MCF 10A (cell line): ENCODE measurements at regions of chr4 and their contacts with region 1.

Region 1: DNA sequence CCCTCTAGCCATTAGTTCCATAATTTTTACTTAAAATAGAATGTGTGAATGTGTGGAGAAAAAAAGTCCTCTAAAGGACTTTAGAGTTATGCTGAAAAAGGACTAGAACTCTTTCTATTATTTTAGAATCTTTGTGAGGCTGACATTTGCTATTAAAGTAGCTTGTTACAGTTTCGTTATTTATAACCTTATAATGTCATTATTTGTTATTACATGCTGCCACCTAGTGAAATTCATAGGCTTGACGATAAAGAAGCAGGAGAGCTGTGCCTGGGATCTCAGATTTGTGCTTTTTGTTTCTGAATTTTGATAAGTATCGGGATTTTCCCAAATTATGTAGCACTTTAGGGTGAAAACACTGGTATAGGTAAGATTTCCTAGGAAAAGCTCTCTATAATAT is 38.5 kb upstream of the TAPT1 start:
- DNase-seq: peak; percentile 51
- H3K4me3 Mint-ChIP-seq: no peak overlapping the region
- H3K27ac Mint-ChIP-seq: no peak overlapping the region
- H3K4me1 Mint-ChIP-seq: no peaks in the 10 kb centered on the region
- H3K27me3 Mint-ChIP-seq: no peaks in the 10 kb centered on the region
- CTCF ChIP-seq: peak; percentile 37

Region 2: GRCh38 chr4:16026160-16026761 is 238.5 kb before region 1 on chr4:
- CTCF ChIA-PET with region 1: interaction called, 16 read pairs
- POLR2A ChIA-PET with region 1: no interaction called
- intact Hi-C with region 1: loop called (anchors 1 kb)
- DNase-seq: peak; percentile 65
- H3K4me3 Mint-ChIP-seq: no peak overlapping the region
- H3K27ac Mint-ChIP-seq: no peak overlapping the region
- H3K4me1 Mint-ChIP-seq: peaks cover 6% of the 10 kb centered on the region
- H3K27me3 Mint-ChIP-seq: no peaks in the 10 kb centered on the region
- CTCF ChIP-seq: peak; percentile 72

Region 3: DNA sequence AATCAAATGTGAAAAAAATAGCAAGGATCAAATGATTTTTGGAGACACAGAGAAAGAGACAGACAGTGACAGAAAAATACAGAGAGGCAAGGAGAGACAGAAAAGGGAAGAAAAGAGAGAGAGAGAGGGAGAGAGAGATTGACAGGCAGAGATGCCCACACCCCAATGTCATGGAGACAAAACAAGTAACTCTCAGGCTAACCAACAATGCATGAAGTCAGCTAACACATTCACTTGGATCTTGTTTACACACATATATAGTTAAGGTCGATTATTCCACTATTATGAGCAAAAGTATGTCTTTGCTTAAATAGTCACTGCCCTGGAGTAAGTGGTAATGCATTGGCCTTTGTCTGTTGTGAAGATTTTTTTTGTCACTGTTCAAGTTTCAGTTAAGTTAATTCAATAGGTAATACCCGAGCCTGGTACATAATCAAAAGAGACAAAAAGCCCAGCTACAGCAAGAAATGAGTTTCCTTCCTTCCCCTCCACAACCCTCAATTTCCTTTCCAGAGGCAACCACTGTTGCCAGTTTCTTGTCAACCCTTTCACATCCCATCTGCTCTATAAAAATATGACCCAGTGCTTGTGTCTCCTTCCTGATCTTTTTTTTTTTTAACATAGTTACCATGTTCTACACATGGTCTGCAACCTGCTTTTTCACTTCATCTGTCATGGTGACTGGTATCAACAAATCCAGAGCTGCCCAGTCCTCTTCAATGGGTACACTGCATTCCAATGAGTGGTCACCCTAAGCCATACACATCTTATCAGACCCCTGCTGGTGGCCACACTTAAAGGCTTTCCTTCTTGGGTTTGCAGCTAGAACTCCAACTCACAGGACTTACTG is 233.0 kb before region 1 on chr4:
- CTCF ChIA-PET with region 1: interaction called, 16 read pairs
- POLR2A ChIA-PET with region 1: no interaction called
- intact Hi-C with region 1: loop called (anchors 1 kb)
- DNase-seq: no peak
- H3K4me3 Mint-ChIP-seq: no peak overlapping the region
- H3K27ac Mint-ChIP-seq: no peak overlapping the region
- H3K4me1 Mint-ChIP-seq: peaks cover 6% of the 10 kb centered on the region
- H3K27me3 Mint-ChIP-seq: no peaks in the 10 kb centered on the region
- CTCF ChIP-seq: no peak

Region 4: DNA sequence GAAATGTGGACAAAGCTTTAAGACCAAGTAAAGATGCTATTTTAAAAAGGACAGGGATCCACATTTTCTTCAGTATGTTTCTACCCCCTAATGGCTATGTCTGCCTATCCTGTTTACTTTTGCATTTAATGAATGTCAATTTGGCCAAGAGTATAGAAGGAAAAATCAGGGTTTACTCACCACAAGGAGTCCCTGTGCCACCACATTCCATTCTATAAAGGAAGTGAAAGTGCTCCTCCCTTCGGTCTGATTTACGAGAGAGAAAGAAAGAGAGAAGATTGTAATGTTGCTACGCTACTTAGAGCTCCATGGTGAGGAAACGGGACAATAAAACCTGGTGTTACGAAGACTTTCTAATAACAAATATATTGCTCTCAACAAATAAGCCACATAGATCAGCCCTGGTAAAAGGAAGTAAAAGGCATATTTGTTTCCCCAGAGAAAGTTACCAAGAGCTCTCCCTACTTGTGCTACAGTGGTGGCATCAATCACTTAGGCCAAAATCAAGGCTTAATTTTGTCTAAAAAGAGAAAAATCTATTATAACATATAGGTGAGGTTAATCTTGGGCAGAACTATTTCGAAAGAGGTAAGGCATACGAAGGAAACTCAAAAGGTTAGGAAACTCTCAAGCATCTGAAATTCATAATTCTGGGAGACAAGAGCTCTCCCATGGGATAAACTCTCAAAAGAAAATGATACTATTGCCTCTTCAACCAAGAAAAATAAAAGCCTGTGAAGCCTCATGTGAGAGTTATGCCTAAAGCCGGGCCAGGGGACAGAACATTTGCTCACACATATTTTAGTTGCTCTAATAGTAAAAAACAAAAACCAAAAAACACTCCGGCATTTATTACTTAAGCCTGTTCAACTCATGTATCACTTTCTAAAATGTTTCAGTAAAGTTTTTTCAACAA is 68.1 kb before region 1 on chr4:
- CTCF ChIA-PET with region 1: interaction called, 27 read pairs
- POLR2A ChIA-PET with region 1: interaction called, 5 read pairs
- intact Hi-C with region 1: loop called (anchors 1 kb)
- DNase-seq: peak; percentile 62
- H3K4me3 Mint-ChIP-seq: peak overlapping the region; percentile 56
- H3K27ac Mint-ChIP-seq: peak overlapping the region; percentile 44
- H3K4me1 Mint-ChIP-seq: no peaks in the 10 kb centered on the region
- H3K27me3 Mint-ChIP-seq: no peaks in the 10 kb centered on the region
- CTCF ChIP-seq: peak; percentile 19

Region 5: DNA sequence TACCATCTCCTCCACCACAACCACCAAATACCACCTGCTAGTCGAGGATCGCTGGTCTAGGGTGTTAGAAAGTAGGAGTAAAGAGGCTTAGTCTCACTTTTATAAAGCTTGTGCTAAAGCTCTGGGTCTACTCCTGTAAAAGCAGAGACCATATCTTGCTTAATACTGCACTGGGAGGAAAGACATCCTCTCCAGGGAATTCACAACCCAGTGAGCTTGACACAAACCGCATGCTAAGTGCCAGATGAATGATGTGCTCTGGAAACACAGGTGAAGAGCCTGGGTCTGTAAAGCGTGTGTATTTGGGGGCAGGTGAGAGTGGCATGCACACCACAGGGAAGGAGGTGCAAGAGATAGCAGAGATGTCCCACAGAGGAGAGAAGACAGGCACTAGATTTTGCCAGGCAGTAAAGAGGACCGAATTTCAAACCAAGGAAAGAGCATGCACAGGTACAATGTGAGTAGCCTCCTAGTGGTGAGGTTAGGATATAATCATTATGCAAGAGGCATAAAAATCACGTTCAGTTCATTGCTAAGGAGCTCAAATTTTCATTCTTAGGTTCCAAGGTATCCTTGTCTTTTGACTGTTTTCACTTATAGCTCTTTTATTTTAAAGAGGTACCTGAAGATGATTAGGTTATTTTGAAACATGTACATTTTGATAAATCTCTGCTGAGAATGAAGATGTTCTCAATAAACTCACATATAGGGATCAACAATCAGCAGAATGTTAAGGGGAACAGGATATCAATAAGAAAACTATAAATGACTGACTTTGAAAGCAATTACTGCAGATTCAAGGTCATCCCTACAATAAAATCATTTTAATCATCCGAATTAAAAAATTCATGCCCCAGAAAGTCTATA is 59.3 kb before region 1 on chr4:
- CTCF ChIA-PET with region 1: interaction called, 13 read pairs
- POLR2A ChIA-PET with region 1: no interaction called
- intact Hi-C with region 1: no loop called
- DNase-seq: peak; percentile 37
- H3K4me3 Mint-ChIP-seq: no peak overlapping the region
- H3K27ac Mint-ChIP-seq: no peak overlapping the region
- H3K4me1 Mint-ChIP-seq: peaks cover 6% of the 10 kb centered on the region
- H3K27me3 Mint-ChIP-seq: no peaks in the 10 kb centered on the region
- CTCF ChIP-seq: peak; percentile 49

Region 6: GRCh38 chr4:16225863-16226815 is 38.7 kb before region 1 on chr4 and contains the start of gene TAPT1:
- CTCF ChIA-PET with region 1: interaction called, 4 read pairs
- POLR2A ChIA-PET with region 1: no interaction called
- intact Hi-C with region 1: loop called (anchors 2 kb)
- DNase-seq: peak; percentile 66
- H3K4me3 Mint-ChIP-seq: peak within 1 kb of the TSS; percentile 78
- H3K27ac Mint-ChIP-seq: peak within 1 kb of the TSS; percentile 88
- H3K4me1 Mint-ChIP-seq: peaks cover 27% of the 10 kb centered on the region
- H3K27me3 Mint-ChIP-seq: no peaks in the 10 kb centered on the region
- CTCF ChIP-seq: no peak
- total RNA-seq, gene TAPT1: 22.0 and 27.8 TPM in 2 replicates

Region 7: GRCh38 chr4:16289897-16290554 is 25.2 kb after region 1 on chr4:
- CTCF ChIA-PET with region 1: no interaction called
- POLR2A ChIA-PET with region 1: no interaction called
- intact Hi-C with region 1: no loop called
- DNase-seq: peak; percentile 54
- H3K4me3 Mint-ChIP-seq: no peak overlapping the region
- H3K27ac Mint-ChIP-seq: no peak overlapping the region
- H3K4me1 Mint-ChIP-seq: peaks cover 6% of the 10 kb centered on the region
- H3K27me3 Mint-ChIP-seq: peaks cover 23% of the 10 kb centered on the region
- CTCF ChIP-seq: peak; percentile 53